Activated CD4-positive, alpha-beta memory T cell treated with anti-CD3 and anti-CD28 coated beads for 36 hours (primary cell): ENCODE measurements at regions of chr21 and their contacts with region 1.

Region 1: DNA sequence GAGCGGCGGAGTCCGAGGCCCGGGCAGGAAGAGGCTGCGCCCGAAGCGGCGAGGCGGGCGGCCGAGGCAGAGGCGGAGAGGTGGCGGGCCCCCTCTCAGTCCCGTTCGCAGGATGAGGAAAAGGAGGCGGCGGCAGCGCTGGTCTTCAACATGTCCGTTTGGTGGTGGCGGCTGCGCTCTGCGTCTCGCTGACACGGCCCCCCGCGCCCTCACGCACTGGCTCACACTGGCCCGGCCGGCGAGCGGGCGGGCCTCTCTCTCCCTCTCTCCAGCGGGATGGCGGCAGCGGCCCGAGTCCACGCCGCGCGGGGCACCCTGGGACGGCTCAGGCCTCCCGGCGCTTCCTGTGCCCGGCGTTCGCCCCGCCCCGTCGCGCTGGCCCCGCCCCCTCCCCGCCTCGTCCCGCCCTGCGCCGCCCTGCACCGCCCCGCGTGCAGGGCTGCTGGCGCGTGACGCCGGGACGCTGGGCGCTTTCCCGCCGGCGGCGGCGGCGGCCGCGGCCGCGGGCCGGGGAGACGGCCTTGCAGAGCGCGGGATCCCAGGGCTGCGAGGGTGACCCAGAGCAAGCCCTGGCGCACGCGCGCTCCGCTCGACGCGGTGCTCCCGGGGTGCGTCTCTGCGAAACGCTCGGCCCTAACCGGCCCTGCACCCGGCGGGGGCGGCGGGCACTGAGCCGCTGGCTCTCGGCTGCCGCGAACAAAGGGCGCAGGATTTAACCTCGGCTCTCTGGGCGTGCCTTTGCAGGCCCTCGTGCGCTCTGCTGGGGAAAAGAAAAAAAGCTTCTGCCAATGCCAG is at the start of gene SCAF4:
- DNase-seq: peak; percentile 90
- H3K4me3 Mint-ChIP-seq: peak within 1 kb of the TSS; percentile 86
- H3K27ac Mint-ChIP-seq: peak within 1 kb of the TSS; percentile 76
- H3K4me1 Mint-ChIP-seq: peaks cover 6% of the 10 kb centered on the region
- H3K27me3 Mint-ChIP-seq: no peaks in the 10 kb centered on the region
- total RNA-seq, gene SCAF4: 38.0 to 39.4 TPM

Region 2: GRCh38 chr21:30718239-30718909 is 1013.6 kb before region 1 on chr21 and contains the start of gene KRTAP21-3:
- CTCF ChIA-PET with region 1: no interaction called
- POLR2A ChIA-PET with region 1: no interaction called
- intact Hi-C with region 1: loop called (anchors 5 kb)
- DNase-seq: peak; percentile 38
- H3K4me3 Mint-ChIP-seq: no peak within 1 kb of the TSS
- H3K27ac Mint-ChIP-seq: peak within 1 kb of the TSS; percentile 28
- H3K4me1 Mint-ChIP-seq: peaks cover 23% of the 10 kb centered on the region
- H3K27me3 Mint-ChIP-seq: no peaks in the 10 kb centered on the region
- total RNA-seq, gene KRTAP21-3: not detected

Region 3: GRCh38 chr21:31558962-31559367 is 173.0 kb before region 1 on chr21:
- CTCF ChIA-PET with region 1: no interaction called
- POLR2A ChIA-PET with region 1: no interaction called
- intact Hi-C with region 1: loop called (anchors 5 kb)
- DNase-seq: peak; percentile 95
- H3K4me3 Mint-ChIP-seq: peak overlapping the region; percentile 85
- H3K27ac Mint-ChIP-seq: no peak overlapping the region
- H3K4me1 Mint-ChIP-seq: peaks cover 30% of the 10 kb centered on the region
- H3K27me3 Mint-ChIP-seq: peaks cover 22% of the 10 kb centered on the region

Region 4: GRCh38 chr21:31665397-31665796 is 66.6 kb before region 1 on chr21:
- CTCF ChIA-PET with region 1: no interaction called
- POLR2A ChIA-PET with region 1: no interaction called
- intact Hi-C with region 1: loop called (anchors 2 kb)
- DNase-seq: peak; percentile 70
- H3K4me3 Mint-ChIP-seq: no peak overlapping the region
- H3K27ac Mint-ChIP-seq: peak overlapping the region; percentile 57
- H3K4me1 Mint-ChIP-seq: peaks cover 93% of the 10 kb centered on the region
- H3K27me3 Mint-ChIP-seq: no peaks in the 10 kb centered on the region

Region 5: DNA sequence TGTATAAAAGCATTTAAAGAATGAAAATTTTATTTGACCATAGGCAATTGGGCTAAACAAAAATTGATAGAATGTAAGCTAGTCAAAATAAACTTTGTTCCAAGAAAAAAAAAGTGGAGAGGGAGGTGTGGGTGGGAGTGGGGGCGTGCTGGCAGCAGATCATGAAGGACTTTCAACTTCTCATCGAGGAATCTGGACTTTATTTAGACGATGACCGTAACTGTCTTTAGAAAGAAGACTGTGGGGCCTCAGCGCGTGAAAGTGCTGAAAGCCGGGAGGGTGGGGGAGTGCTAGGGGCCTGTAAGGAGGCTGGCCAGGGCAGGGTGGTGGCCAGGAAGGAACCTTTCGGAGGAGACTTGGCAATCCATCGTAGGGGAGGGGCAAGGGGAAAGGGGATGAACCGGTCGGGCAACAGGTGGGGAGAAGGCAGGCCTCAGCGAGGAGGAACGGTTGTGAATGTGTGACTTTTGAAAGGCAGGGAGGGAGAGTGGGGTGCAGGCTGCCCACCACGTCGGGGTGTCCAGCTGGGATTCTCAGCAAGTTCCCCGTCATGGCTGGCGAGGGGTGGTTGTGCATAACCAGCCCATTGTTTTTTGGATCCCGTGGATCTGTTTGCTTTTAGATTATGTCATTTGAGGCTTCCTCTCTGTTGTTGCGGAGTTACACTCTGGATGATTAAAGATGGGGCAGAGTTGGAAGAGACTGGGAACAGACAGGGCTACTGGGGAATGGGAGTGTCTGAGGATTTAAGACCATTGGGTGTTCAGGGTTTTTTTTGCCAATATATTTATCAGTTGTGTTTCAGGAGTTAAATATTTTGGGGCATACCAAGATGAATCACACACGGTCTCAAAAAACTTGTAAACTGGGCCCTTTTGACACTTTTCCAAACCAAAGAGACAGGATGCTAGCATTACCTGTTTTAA is 176.4 kb after region 1 on chr21:
- CTCF ChIA-PET with region 1: no interaction called
- POLR2A ChIA-PET with region 1: no interaction called
- intact Hi-C with region 1: no loop called
- DNase-seq: no peak
- H3K4me3 Mint-ChIP-seq: no peak overlapping the region
- H3K27ac Mint-ChIP-seq: no peak overlapping the region
- H3K4me1 Mint-ChIP-seq: no peaks in the 10 kb centered on the region
- H3K27me3 Mint-ChIP-seq: peaks cover 32% of the 10 kb centered on the region

Region 6: DNA sequence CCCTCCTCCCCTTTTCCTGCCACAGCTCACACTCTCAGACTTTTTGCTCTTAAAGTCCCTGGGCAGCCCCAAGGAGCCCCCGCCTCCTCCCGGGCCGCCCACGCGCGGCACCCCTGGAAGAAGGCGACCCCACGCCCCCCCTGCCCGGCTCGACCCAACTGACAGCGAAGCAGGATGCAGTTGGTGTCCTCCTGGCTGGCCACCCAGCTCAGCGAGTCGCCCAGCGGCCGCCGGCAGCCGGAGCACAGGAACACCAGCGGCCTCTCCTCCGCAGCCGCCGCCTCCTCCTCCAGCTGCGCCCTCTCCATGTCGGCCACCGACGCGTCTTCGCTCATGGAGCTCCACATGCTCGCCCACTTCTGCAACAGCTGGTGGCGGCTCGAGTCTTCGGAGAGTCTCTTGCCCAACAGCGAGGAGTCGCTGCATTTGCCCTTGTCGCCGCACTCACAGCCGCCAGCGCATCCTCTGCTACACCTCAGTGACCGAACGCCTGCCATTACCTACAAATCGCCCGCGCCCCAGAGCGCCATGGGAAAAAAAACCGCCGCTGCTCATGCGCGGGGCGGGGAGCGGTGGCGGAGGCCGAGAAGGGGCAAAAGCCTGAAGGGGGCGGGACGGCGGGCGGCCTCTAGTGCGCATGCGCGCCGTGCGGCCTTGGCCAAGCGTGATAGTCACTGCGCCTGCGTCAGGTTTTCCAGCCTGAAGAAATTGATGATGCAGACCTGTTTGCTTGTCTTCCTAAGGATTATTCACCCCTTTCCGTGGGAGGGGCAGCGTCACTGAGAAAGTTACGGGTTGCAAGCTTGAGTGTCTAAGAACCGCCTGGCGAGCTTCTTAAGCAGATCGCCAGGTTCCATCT is 546.7 kb after region 1 on chr21 and contains the start of gene MIS18A:
- CTCF ChIA-PET with region 1: no interaction called
- POLR2A ChIA-PET with region 1: no interaction called
- intact Hi-C with region 1: loop called (anchors 2 kb)
- DNase-seq: peak; percentile 99
- H3K4me3 Mint-ChIP-seq: peak within 1 kb of the TSS; percentile 99
- H3K27ac Mint-ChIP-seq: peak within 1 kb of the TSS; percentile 88
- H3K4me1 Mint-ChIP-seq: peaks cover 11% of the 10 kb centered on the region
- H3K27me3 Mint-ChIP-seq: no peaks in the 10 kb centered on the region
- total RNA-seq, gene MIS18A: 34.2 to 36.1 TPM